Sciatic nerve (tissue), 2 donors: ENCODE measurements at regions of chr16 and their contacts with region 1.

Region 1: DNA sequence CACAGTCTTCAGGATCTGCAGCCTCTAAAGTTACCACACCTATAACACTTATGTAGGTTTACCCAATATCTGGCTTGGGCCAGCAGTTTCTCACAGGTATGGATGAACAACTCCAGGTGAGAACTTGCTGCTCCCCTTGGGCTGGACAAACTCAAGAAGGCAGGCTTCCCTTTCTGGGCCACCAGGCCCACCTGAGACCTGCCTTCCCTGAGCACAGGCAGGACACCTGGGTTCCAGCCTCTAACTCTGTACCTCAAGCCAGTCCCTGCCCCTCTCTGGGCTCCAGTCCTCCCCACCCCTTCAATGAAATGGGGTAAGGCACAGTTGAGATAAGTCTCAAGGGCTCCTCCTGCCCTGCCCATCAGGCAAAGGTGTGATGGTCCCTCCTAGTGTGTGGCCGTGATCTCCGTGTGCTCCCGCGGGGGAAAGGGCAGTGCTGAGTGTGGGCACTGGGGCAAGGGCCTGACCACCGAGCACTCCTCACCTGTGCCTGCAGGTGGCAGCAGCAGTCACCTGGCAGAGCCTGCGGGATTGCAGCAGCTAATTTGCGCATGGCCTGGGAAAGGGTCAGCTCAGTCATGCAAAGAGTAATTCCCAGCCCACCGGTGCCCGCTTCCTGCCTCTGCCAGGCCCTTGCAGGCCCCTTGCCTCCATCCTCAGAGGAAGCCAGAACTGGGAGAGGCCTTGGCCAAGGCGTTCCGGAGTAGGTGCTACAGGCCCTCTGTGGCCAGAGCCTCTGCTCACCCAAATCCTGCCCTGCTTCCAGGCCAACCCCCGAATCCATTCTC is 28.2 kb upstream of the ADGRG1 start:
- DNase-seq: no peak
- ATAC-seq: peak; percentile 41

Region 2: DNA sequence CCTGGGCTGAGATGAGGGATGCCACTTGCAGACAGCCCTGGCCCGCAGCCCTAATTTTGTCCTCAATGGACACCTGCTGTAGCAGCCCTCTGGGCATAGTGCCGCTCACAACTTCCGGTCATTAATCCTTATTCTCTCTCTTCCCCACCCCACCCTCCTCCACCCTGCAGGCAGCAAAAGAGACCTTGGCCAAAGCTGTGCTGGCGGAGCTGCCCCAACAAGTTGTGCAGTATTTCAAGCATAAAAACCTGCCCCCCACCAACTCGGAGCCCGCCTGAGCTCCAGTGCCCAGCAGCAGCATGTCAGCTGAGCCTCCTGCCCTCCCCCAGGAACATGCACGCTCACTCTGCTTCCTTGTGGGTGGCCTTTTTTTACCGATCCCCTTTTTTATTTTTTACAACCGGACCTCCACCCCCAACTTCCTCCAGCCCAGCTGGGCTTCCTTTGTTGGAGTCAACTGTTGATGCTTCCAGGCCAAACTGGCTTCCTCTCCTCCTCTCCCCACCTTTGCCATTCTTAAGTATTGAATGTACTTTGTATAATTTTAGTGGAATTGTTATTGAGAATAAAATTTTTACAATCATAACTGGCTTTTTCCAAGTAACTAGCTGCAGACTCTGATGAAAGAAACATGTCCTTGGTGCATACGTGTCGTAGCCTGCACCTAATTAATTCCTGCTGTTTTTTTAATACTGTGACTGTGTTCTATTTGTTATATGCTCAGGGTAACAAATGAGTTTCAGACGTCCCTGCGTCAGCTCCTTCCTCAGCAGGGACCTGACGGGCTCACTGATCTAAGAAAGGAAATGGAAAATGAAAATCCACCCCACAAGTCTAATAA is 452.6 kb before region 1 on chr16:
- intact Hi-C with region 1: no loop called
- DNase-seq: no peak
- ATAC-seq: peak; percentile 61

Region 3: DNA sequence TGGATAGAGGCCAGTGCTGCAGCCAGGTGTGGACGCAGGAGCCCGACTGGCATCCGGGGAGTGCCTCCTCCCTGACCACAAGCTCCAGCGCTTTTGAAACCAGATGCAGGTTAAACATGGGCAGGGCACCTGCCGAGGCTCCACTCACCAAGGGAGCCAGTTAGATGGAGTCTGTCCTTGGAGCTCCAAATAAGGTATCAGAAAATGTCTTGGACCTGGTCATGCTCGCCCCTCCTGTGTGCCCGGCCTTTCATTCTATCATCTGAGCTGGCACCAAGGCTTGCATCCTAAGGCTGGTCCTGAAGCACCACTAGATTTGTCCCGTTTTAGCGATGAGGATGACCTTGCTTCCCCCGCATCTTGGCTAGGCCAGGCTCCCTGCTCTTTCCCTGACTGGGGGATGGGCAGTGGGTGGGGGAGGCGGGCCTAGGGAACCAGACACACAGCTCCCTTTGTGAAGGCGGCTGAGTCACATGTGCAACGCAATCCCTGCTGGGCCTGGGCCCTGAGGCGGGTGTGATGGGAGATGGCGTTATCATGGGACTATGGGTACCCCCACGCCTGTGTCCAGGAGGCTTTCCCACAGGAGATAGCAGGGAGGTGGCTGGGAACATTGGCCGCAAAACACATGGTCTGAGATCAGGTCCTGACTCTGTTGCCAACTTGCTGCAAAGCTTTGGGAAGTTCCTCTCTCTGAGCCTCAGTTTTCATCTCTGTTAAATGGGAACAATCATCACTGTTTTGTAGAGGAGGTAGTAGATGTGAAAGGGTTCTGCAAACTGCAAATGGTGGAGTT is 23.2 kb after region 1 on chr16:
- intact Hi-C with region 1: no loop called
- DNase-seq: peak; percentile 83
- ATAC-seq: peak; percentile 62

Region 4: GRCh38 chr16:57648590-57649442 is 48.6 kb after region 1 on chr16:
- intact Hi-C with region 1: loop called (anchors 5 kb)
- DNase-seq: peak; percentile 81
- ATAC-seq: peak; percentile 44